Head of caudate nucleus (tissue), 42 donors: ENCODE measurements at regions of chr7 and their contacts with region 1.

Region 1: DNA sequence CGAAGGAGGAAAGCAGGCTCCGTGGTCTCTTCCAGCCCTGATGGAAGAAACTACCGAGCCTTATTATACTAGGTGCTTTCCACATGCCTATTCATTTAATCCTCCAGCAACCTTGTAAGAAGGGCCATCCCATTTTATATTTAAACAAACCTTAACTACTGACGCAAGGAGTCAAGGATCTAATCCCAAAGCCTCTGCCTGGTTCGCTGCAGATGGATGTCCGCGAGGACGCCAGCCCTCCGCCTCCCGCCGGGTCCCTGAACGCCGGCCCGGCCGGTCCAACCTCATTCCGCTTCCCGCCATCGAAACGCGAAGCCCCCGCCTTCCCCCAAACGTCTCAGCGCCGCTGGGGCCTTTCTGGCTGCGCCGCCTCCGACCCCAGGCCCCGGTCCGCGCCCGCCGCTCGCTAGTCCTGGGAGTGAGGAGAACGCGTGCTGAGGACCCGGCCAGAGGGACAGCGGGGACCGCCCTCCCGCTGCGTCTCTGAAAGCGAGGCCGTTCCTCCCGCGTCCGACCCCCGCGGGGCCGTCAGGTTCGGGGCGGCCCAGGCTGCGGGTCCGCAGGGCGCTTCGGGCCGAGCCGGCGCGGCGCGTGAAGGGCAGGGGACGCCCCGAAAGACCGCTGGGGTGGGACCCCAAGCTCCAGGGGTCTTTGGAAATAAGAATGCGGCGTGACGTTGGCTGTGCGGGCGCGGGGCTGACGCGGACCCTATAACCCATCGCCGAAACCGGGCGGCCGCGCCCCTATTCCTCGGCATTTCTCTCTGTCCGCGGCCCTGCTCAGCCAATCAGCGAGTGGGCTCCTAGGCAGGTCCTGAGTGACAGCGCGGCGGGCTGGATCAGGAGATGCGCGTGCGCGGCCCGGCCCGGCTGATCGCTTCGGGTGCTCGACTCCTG is at the start of gene ATP6V0E2:
- DNase-seq: peak; percentile 93 to 98 (median 97)

Region 2: DNA sequence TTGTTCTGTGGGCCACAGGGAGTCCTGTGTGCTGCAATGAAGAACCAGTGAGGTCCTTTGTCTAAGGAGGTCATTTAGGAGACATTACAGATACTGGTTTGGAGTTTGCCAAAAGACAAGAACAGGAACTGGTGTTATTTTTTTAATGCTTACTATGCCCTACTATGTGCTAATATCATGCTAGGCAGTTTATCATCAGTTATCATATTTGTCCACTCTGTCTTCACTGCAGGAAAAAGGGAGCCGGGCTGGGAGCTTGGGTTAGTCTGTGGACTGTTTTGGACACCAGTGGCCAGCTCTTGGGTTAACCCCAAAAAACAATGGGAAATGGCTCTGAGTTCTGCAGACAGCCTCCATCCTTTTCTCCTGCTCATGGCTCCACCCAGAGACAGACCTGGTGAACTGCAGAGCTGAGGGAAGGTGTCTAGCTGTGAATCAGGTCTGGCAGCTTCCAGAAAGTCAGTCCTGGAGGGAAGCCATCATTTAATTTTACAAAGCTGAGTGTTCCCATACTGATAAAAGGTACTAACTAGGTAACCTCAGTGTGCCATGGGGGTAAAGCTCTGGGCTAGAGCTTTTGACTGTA is 274.5 kb before region 1 on chr7:
- intact Hi-C with region 1: no loop called
- DNase-seq: peak in 22 of 42 donors; percentile 9 to 66 (median 42)

Region 3: GRCh38 chr7:149838224-149838947 is 34.9 kb before region 1 on chr7 and contains the start of gene ZNF862:
- intact Hi-C with region 1: loop called (anchors 5 kb)
- DNase-seq: peak; percentile 98 to 100 (median 99)

Region 4: DNA sequence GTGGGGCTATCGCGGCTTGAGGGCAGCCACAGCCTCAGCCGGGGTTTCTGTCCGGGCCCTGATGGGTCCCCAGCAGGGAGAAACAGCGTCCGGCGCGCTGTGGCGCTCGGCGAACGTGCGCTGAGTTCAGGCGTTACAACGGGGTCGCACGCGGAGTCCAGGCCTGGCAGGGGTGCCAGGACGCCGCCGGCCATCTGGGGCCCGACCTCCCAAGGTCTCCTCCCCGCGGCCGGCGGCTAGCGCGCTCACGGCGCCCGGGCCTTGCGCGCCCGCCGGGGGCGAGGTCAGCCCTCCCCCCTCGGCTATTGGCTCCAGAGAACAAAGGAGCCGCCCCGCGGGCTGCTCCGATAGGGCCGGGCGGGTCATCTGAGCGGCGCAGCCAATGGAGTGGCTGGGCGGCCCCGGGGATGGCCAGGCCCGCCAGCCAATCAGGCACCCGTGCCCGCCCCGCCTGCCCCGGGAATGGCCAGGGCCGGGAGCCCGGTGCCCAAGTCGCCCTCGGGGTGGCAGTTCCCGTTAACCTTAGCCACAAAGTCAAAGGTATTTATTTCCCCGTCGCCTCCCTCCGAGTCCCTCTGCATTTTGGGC is 505.6 kb after region 1 on chr7 and contains the start of gene ZNF775:
- intact Hi-C with region 1: loop called (anchors 10 kb)
- DNase-seq: peak; percentile 88 to 98 (median 96)